Activated T-helper 1 cell treated with anti-CD3 and anti-CD28 coated beads, Interleukin-12 subunit alpha, Interleukin-12 subunit beta, Interleukin-2, Interleukin-4 antibody, amounts not matched to agents 30 ng/mL and 10 ng/mL and 1 ng/mL, durations not matched to agents 14 hours and 24 hours and 36 hours (primary cell): ENCODE measurements at regions of chr11 and their contacts with region 1.

Region 1: DNA sequence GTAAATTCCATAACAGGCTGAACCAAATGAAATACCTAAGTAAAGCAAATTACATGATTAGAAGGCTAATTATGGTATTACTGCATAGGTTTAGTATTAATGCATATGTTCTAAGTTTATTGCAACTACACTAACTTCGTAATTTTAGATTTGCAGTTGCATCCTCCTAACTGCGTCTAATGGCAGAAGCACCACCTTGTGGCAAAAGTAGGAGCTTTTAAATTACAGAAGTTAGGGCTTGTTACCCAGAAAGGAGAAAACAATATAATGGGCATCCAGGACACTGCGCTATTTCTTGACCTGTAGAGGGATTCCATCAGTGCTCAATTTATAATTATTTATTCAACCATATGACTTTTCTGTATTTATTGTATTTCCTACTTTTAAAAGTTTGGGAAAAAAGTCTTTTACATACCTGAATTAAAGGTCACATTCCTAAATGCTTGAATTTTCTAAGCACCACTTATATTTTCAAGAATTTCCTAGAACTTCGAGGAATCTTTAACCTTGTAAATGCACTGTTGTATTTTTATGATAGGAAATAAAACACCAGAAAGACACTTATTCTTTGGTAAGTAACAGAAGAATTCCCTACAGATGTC is 16.3 kb upstream of the GPR83 start:
- DNase-seq: no peak
- H3K4me3 Mint-ChIP-seq: no peak overlapping the region
- H3K27ac Mint-ChIP-seq: no peak overlapping the region
- H3K4me1 Mint-ChIP-seq: no peaks in the 10 kb centered on the region
- H3K27me3 Mint-ChIP-seq: no peaks in the 10 kb centered on the region

Region 2: DNA sequence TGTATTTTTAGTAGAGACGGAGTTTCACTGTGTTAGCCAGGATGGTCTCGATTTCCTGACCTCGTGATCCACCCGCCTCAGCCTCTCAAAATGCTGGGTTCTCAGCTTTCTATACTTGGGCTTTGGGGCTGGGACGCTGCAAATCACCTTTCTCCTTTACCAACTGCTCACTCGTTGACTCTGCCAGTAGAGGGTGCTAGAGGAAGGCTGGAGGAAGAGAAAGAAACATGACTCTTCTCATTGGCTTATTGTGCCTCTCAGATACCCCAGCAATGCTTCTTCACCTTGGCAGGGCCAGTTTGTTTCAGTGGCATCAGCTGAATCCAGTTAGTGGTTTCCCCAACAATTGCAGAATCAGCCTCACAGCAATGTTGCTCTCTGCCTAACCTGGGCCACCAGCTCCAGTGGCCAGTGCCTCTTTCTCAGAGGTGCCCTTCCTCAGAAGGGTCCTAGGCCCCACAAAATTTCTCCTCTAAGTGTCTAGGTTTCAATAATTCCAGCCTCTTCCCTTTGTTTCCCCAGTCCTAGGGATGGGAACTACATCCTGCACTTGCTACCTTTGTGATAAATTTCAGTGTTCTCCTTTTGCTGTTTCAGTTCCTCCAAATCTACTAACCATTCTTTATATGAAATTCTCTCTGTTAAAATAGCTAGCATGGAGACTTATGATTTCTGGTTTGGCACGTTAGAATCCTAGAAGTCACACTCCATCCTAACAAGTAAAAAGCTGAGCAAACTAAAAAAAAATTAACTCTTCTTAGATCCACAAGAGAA is 495.6 kb before region 1 on chr11:
- intact Hi-C with region 1: loop called (anchors 1 kb)
- DNase-seq: peak; percentile 7
- H3K4me3 Mint-ChIP-seq: no peak overlapping the region
- H3K27ac Mint-ChIP-seq: no peak overlapping the region
- H3K4me1 Mint-ChIP-seq: no peaks in the 10 kb centered on the region
- H3K27me3 Mint-ChIP-seq: peaks cover 2% of the 10 kb centered on the region

Region 3: DNA sequence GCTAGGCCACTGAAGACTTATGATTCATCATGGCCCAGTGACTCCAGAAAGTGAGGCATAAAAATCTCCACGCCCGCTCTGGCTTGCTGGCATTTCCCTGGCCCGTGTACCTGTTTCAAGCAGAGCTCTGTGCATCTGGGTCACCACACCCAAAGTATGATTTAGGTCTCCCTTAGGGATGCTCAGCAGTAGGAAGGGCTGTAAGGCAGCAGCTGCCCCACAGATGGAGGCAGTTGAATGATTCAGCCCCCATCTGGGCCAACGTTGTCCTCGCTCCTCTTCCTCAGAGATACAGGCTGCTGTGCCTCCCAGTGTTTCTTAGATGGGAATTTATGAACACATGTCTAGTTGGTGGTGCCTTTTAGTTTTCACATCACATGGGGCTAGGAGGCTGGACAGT is 37.9 kb before region 1 on chr11:
- intact Hi-C with region 1: no loop called
- DNase-seq: no peak
- H3K4me3 Mint-ChIP-seq: no peak overlapping the region
- H3K27ac Mint-ChIP-seq: no peak overlapping the region
- H3K4me1 Mint-ChIP-seq: no peaks in the 10 kb centered on the region
- H3K27me3 Mint-ChIP-seq: no peaks in the 10 kb centered on the region